ENCODE measurements at regions of chr20 and their contacts with region 1.

Region 1: GRCh38 chr20:3156811-3157619 is 2.6 kb downstream of the FASTKD5 start:
- DNase-seq: peak in 7 of 9 donors; percentile 34 to 70 (median 57)
- ATAC-seq: peak; percentile 86
- H3K4me3 ChIP-seq: peak overlapping the region; percentile 27
- H3K4me3 Mint-ChIP-seq: peak overlapping the region; percentile 69 to 99 (median 86)
- H3K27ac ChIP-seq: peak overlapping the region; percentile 50
- H3K27ac Mint-ChIP-seq: peak overlapping the region; percentile 81 to 99 (median 89)
- H3K4me1 ChIP-seq: peaks cover 18 to 35% of the 10 kb centered on the region in 2 donors
- H3K4me1 Mint-ChIP-seq: peaks cover 46 to 82% (median 67%) of the 10 kb centered on the region in 7 donors
- H3K27me3 ChIP-seq: no peaks in the 10 kb centered on the region
- H3K27me3 Mint-ChIP-seq: no peaks in the 10 kb centered on the region

Region 2: DNA sequence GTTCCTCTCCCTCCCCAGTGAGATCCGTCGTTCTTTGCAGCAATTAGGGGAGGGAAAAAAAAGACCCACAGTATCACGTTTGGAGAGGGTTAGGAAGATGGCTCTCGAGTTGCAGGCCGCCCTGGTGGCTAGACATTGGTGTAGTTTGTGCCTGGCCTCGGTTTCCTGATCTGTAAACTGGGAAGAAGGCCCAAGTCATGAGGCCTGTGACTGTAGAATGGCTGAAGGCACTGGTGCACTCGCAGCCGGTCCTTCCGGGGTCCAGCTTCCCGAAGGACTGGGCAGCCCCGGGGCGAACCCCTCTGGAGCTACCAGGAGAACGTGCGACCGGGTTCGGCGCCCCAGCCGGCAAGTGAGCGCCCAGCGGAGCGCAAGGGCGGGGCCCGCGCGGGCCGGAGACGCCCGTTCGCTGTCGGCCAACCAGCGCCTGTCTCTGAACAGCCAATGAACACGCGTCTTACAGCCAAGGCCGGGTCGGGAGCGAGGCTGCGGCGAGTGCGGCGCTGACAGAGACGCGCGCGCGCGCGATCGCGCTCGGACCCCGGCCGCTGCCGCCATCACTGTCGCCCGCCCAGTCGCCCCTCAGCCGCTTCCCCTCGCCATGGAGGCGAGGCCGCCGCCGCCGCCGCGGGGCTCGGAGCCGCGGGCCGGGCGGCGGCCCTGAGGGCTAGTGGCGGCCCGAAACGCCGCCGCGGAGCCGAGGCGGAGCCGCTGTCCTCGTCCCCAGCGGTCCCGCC is 283.8 kb before region 1 on chr20 and contains the start of gene PTPRA:
- CTCF ChIA-PET with region 1: no interaction called
- POLR2A ChIA-PET with region 1: no interaction called
- intact Hi-C with region 1: loop called in 1 of 2 experiments (anchors 10 kb)
- DNase-seq: peak; percentile 80 to 91 (median 88)
- ATAC-seq: peak; percentile 96
- H3K4me3 ChIP-seq: peak within 1 kb of the TSS; percentile 80
- H3K4me3 Mint-ChIP-seq: peak within 1 kb of the TSS; percentile 84 to 96 (median 94)
- H3K27ac ChIP-seq: peak within 1 kb of the TSS; percentile 71
- H3K27ac Mint-ChIP-seq: peak within 1 kb of the TSS; percentile 83 to 95 (median 90)
- H3K4me1 ChIP-seq: peaks cover 25% of the 10 kb centered on the region in 2 donors
- H3K4me1 Mint-ChIP-seq: peaks cover 31 to 47% (median 42%) of the 10 kb centered on the region in 7 donors
- H3K27me3 ChIP-seq: no peaks in the 10 kb centered on the region
- H3K27me3 Mint-ChIP-seq: no peaks in the 10 kb centered on the region
- total RNA-seq, gene PTPRA: 68.0 to 86.6 (median 81.2) TPM

Region 3: GRCh38 chr20:3082306-3082951 is 74.6 kb before region 1 on chr20:
- CTCF ChIA-PET with region 1: no interaction called
- POLR2A ChIA-PET with region 1: interaction called, 5 read pairs
- intact Hi-C with region 1: loop called in 1 of 2 experiments (anchors 5 kb)
- DNase-seq: peak in 1 of 9 donors; percentile 10
- ATAC-seq: peak; percentile 35
- H3K4me3 ChIP-seq: peak overlapping the region; percentile 24
- H3K4me3 Mint-ChIP-seq: peak overlapping the region; percentile 62 to 83 (median 72)
- H3K27ac ChIP-seq: no peak overlapping the region
- H3K27ac Mint-ChIP-seq: no peak overlapping the region
- H3K4me1 ChIP-seq: peaks cover 0 to 14% of the 10 kb centered on the region in 2 donors
- H3K4me1 Mint-ChIP-seq: peaks cover 11 to 19% (median 17%) of the 10 kb centered on the region in 7 donors
- H3K27me3 ChIP-seq: peaks cover 0 to 13% of the 10 kb centered on the region in 2 donors
- H3K27me3 Mint-ChIP-seq: peaks cover 8 to 62% (median 23%) of the 10 kb centered on the region in 5 donors

Region 4: DNA sequence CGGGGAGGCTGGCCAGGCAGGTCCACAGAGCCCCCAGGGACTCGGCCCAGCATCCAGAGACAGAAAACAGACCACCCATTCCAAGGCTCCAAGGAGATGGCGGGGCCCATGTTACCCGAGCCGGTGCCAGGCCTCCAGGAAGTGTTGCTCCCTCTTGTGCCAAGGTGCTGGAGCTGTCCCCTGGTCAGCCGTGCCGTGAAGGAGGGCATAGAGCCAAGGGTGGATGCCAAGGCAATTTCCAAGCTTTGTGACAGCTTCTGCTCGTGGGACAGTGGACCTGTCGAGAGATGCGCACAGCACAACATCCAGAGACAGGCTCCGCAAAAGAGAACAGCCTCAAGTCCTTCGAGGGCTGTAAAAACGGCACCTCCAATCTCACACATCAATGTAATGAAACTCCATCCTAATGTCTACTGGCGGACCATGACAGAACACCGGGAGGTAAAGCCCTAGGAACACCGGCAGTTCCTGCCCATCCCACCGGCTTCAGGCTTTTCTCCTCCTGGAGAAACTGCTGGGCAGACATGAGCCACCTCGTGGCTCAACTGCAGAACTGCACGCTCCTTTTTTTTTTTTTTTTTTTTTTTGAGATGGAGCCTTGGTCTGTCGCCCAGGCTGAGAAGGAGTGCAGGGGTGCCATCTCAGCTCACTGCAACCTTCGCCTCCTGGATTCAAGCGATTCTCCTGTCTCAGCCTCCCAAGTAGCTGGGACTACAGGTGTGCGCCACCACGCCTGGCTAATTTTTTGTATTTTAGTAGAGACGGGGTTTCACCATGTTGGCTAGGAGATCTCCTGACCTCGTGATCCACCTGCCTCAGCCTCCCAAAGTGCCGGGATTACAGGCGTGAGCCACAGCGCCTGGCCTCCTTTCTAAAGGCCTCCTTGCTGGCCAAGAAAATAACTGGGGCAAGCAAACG is 41.6 kb before region 1 on chr20:
- CTCF ChIA-PET with region 1: interaction called, 11 read pairs
- POLR2A ChIA-PET with region 1: interaction called, 40 read pairs
- intact Hi-C with region 1: loop called in 1 of 2 experiments (anchors 1 kb)
- DNase-seq: peak in 6 of 9 donors; percentile 32 to 55 (median 44)
- ATAC-seq: peak; percentile 68
- H3K4me3 ChIP-seq: no peak overlapping the region
- H3K4me3 Mint-ChIP-seq: peak overlapping the region in 2 of 10 donors; percentile 8 to 16
- H3K27ac ChIP-seq: no peak overlapping the region
- H3K27ac Mint-ChIP-seq: peak overlapping the region in 7 of 9 donors; percentile 31 to 97 (median 77)
- H3K4me1 ChIP-seq: peaks cover 0 to 6% of the 10 kb centered on the region in 2 donors
- H3K4me1 Mint-ChIP-seq: peaks cover 11 to 47% (median 28%) of the 10 kb centered on the region in 7 donors
- H3K27me3 ChIP-seq: no peaks in the 10 kb centered on the region
- H3K27me3 Mint-ChIP-seq: no peaks in the 10 kb centered on the region

Region 5: GRCh38 chr20:3173610-3174441 is 16.8 kb after region 1 on chr20:
- CTCF ChIA-PET with region 1: interaction called, 8 read pairs
- POLR2A ChIA-PET with region 1: interaction called, 72 read pairs
- intact Hi-C with region 1: loop called (anchors 1 kb)
- DNase-seq: peak in 7 of 9 donors; percentile 81 to 94 (median 92)
- ATAC-seq: peak; percentile 94
- H3K4me3 ChIP-seq: peak overlapping the region; percentile 87
- H3K4me3 Mint-ChIP-seq: peak overlapping the region; percentile 76 to 89 (median 86)
- H3K27ac ChIP-seq: peak overlapping the region; percentile 4
- H3K27ac Mint-ChIP-seq: peak overlapping the region; percentile 3 to 86 (median 51)
- H3K4me1 ChIP-seq: peaks cover 4 to 14% of the 10 kb centered on the region in 2 donors
- H3K4me1 Mint-ChIP-seq: peaks cover 15 to 34% (median 23%) of the 10 kb centered on the region in 7 donors
- H3K27me3 ChIP-seq: peaks cover 0 to 5% of the 10 kb centered on the region in 2 donors
- H3K27me3 Mint-ChIP-seq: peaks cover 0 to 63% (median 16%) of the 10 kb centered on the region in 5 donors

Region 6: DNA sequence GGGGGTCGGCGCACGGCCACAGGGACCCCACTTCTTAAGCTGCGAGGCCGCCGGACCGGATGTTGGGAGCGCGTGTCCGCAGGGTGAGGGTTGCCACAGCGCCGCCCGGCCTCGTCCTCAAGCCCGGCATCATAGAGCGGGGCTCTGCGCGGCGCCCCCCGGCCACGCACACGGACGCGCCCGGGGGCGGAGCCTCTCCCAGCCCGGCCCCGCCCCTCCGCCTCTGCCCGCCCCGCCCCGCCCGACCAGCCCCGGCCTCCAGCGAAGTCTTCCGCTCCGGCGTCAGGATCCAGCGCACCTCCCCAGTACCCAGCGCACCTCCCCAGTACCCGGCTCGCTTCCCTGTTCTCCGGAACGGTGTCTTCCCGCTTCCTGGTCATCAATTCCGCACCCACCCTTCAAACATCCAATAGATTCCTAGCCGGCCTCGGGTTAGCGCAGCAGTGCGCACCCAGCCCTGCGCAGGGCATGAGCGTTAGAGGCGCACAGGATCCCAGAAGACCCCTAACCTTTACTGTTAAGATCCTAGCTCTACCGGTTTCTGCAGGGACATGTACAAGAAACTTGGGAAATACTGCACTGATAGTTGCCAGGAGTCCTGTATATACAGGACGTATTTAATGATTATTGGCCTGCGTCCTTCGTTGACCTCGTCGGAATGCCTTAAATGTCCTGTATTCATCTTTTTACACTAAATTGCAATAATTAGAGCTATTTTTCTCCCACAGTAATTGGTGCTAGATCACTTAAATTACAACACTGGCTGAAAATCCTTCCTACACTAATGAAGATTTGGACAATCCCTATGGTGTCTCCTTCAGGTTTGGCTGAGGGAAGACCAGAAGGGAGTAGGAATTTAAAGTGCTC is 251.0 kb after region 1 on chr20:
- CTCF ChIA-PET with region 1: no interaction called
- POLR2A ChIA-PET with region 1: no interaction called
- intact Hi-C with region 1: loop called in 1 of 2 experiments (anchors 5 kb)
- DNase-seq: peak; percentile 53 to 74 (median 68)
- ATAC-seq: peak; percentile 80
- H3K4me3 ChIP-seq: peak overlapping the region; percentile 90
- H3K4me3 Mint-ChIP-seq: peak overlapping the region; percentile 94 to 100 (median 97)
- H3K27ac ChIP-seq: peak overlapping the region; percentile 70
- H3K27ac Mint-ChIP-seq: peak overlapping the region; percentile 83 to 97 (median 92)
- H3K4me1 ChIP-seq: no peaks in the 10 kb centered on the region
- H3K4me1 Mint-ChIP-seq: peaks cover 19 to 35% (median 29%) of the 10 kb centered on the region in 7 donors
- H3K27me3 ChIP-seq: no peaks in the 10 kb centered on the region
- H3K27me3 Mint-ChIP-seq: peaks cover 0 to 37% (median 0%) of the 10 kb centered on the region in 5 donors